ENCODE measurements at regions of chr6 and their contacts with region 1.

Region 1: DNA sequence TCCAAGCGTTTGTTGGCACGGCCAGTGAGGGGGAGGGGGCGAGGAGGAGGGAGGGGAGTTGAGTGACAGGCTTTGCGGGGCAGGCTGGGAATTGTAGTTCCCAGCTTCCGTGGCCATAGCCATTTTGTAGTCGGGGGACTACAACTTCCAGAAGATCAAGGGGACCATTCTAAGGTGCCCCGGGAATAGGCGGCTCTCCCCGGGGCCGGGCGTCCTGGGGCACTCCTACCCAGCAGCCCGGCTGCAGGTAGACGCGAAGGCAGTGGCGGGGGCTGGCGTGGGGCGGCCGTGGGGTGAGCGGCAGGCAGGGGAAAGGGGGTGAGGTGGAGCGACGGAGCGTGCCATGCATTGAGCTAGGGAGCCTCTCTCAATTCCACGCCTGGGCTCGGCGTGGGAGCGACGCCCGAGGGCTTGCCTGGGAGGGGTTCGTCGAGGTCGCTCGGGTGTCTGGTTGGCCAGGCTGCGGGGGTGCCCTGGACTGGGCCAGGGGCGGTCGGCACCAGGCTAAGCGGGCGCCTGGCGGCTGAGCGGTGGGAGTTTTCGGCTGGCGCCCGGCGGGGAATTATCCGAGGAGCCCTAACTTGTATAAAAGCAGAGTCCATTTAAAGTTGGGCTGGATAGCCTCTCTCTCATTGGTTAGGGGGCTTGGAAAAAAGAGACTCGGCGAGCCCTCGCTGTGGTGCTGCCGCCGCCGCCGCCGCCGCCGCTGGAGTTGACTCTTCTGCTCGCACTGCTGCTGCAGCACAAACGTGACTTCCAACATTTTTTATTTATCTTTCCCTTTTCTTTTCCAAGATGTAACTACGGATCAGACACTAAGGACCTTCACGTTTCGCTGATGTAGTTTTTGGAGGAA is at the start of gene JARID2:
- DNase-seq: peak; percentile 98
- H3K4me3 Mint-ChIP-seq: peak within 1 kb of the TSS; percentile 95
- H3K27ac Mint-ChIP-seq: peak within 1 kb of the TSS; percentile 94
- H3K4me1 Mint-ChIP-seq: peaks cover 10% of the 10 kb centered on the region
- H3K27me3 Mint-ChIP-seq: no peaks in the 10 kb centered on the region
- CTCF ChIP-seq: no peak
- total RNA-seq, gene JARID2: 21.0 and 27.8 TPM in 2 replicates

Region 2: GRCh38 chr6:14210663-14211561 is 1034.7 kb before region 1 on chr6:
- CTCF ChIA-PET with region 1: no interaction called
- POLR2A ChIA-PET with region 1: interaction called, 4 read pairs
- intact Hi-C with region 1: loop called (anchors 1 kb)
- DNase-seq: peak; percentile 85
- H3K4me3 Mint-ChIP-seq: peak overlapping the region; percentile 72
- H3K27ac Mint-ChIP-seq: no peak overlapping the region
- H3K4me1 Mint-ChIP-seq: peaks cover 13% of the 10 kb centered on the region
- H3K27me3 Mint-ChIP-seq: no peaks in the 10 kb centered on the region
- CTCF ChIP-seq: peak; percentile 76

Region 3: DNA sequence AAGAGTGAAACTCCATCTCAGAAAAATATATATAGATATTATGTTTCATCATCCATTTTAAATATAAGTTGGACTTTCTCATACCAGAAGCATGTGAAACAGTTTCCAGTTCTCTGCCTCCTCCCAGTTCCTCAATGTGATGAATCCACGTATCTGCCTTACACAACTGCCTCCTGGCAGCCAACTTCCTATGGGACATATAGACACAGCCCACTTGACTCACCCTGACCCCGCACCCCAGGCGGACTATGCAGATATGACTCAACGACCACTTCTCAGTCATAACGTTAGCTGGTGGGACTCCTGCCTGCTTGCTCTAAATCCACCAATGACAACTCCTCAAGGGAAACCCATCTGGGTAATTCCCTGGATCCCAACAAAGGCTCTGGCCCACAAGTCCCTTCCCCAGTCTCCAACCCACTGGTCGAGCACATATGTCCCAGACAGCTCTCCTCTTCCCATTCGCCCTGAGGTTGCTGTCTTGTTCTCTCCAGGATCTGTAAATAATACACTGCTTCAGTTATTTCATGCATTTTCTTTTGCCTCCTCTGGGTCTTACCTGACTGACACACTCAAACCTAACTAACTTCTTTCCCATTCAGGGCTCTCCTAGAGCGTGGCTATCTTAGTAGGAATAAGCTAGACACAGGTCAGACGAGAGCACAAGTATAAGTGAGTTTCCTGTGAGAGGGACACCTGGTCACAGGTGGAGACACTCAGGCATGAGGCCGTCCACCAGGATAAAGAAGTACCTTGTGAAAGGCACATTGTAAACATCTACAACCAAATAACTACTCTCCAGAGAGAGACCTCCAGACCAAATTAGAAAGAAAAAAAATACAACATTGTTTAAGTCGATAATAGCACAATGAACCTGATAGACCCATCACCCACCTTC is 579.5 kb before region 1 on chr6:
- CTCF ChIA-PET with region 1: no interaction called
- POLR2A ChIA-PET with region 1: no interaction called
- intact Hi-C with region 1: loop called (anchors 5 kb)
- DNase-seq: peak; percentile 95
- H3K4me3 Mint-ChIP-seq: no peak overlapping the region
- H3K27ac Mint-ChIP-seq: peak overlapping the region; percentile 69
- H3K4me1 Mint-ChIP-seq: peaks cover 22% of the 10 kb centered on the region
- H3K27me3 Mint-ChIP-seq: no peaks in the 10 kb centered on the region
- CTCF ChIP-seq: no peak

Region 4: DNA sequence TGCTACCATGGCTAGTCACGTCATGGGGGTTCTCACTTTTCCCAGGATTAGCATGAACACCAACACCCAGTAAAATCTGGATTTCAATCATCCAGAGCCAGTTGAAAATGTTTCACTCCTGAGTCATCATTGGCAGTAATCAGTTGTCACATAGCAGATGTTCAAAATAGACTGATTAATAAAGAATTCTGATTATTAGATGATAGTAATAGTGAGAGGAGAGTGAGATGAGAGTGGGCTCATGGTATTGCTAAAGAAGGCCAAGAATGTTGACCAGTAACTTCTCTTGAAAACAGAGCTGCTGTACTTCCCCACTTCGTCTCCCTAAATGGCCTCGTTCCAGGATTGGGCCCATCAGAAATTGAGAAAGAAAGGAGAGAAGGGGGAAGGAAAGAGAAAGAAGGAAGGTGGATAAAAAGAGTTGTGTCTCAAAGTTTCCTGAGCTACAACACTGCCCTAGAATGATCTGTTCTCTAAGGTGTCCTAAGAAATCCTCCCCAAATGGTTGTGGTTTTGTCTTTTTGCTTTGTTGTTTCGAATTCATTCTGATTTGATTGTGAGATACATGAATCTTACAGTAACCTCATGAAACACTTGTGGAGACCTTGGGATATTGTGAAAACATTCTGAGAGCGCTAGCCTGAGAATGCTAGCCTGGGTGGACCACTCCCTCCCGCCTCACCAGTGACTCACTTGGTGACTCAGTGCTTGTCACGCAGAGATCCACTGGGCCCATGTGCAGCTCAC is 502.0 kb before region 1 on chr6:
- CTCF ChIA-PET with region 1: interaction called, 3 read pairs
- POLR2A ChIA-PET with region 1: interaction called, 19 read pairs
- intact Hi-C with region 1: loop called (anchors 1 kb)
- DNase-seq: peak; percentile 99
- H3K4me3 Mint-ChIP-seq: peak overlapping the region; percentile 73
- H3K27ac Mint-ChIP-seq: peak overlapping the region; percentile 100
- H3K4me1 Mint-ChIP-seq: peaks cover 41% of the 10 kb centered on the region
- H3K27me3 Mint-ChIP-seq: no peaks in the 10 kb centered on the region
- CTCF ChIP-seq: no peak

Region 5: DNA sequence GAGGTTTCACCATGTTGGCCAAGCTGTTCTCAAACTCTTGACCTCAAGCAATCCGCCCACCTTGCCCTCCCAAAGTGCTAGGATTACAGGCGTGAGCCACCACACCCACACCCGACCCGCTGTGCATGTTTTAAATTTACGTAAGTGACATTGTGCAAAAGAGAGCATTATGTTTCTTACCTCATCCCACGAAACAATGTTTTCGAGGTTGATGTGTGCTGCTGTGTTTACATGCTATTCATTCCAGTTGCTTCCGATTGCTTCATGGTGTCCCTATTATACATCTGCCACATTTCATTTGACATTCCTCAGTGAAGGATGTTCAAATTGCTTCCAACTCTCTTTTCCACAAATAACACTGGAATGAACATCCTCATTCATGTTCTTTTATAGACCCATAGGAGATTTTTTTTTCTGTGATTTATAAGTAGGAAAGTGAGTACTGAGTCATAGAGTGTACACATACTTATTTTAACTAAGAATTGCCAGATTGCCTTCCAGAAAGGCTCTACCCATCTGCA is 403.6 kb before region 1 on chr6:
- CTCF ChIA-PET with region 1: no interaction called
- POLR2A ChIA-PET with region 1: interaction called, 4 read pairs
- intact Hi-C with region 1: loop called (anchors 1 kb)
- DNase-seq: peak; percentile 88
- H3K4me3 Mint-ChIP-seq: peak overlapping the region; percentile 42
- H3K27ac Mint-ChIP-seq: peak overlapping the region; percentile 83
- H3K4me1 Mint-ChIP-seq: peaks cover 15% of the 10 kb centered on the region
- H3K27me3 Mint-ChIP-seq: no peaks in the 10 kb centered on the region
- CTCF ChIP-seq: no peak

Region 6: GRCh38 chr6:15132854-15133670 is 112.5 kb before region 1 on chr6:
- CTCF ChIA-PET with region 1: no interaction called
- POLR2A ChIA-PET with region 1: interaction called, 6 read pairs
- intact Hi-C with region 1: loop called (anchors 2 kb)
- DNase-seq: peak; percentile 100
- H3K4me3 Mint-ChIP-seq: no peak overlapping the region
- H3K27ac Mint-ChIP-seq: peak overlapping the region; percentile 75
- H3K4me1 Mint-ChIP-seq: peaks cover 14% of the 10 kb centered on the region
- H3K27me3 Mint-ChIP-seq: no peaks in the 10 kb centered on the region
- CTCF ChIP-seq: no peak

Region 7: DNA sequence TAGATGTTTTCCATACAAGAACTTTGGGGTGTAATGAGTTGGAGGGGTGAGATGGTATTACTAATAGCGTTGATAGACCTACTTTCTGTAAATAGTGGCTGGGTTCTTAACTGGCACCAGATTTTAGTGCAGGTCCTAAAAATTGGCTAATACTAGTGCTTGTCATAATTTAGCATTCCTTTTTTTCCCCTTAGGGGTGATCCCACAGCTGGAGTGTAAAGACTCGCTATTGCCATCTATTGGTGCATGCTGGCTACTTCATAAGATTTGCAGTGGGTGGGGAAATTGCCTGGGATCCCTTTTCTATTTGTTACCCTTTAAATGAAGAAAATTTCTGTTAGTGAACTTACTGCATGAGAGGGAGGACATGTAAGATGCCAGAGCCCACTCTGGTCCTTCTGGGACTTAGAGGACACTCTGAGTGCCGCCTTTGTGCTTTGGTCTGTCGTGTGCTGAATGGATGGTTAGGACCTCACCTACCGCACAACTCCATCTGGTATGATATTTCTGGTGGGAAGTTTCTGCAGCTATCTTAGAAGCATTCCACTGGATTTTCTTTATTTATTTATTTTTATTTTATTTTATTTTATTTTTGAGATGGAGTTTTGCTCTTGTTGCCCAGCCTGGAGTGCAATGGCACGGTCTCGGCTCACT is 195.8 kb after region 1 on chr6:
- CTCF ChIA-PET with region 1: interaction called, 6 read pairs
- POLR2A ChIA-PET with region 1: interaction called, 5 read pairs
- intact Hi-C with region 1: loop called (anchors 1 kb)
- DNase-seq: peak; percentile 82
- H3K4me3 Mint-ChIP-seq: no peak overlapping the region
- H3K27ac Mint-ChIP-seq: no peak overlapping the region
- H3K4me1 Mint-ChIP-seq: peaks cover 31% of the 10 kb centered on the region
- H3K27me3 Mint-ChIP-seq: no peaks in the 10 kb centered on the region
- CTCF ChIP-seq: peak; percentile 75

Measured in MCF 10A (cell line).